ENCODE measurements at regions of chr16 and their contacts with region 1.

Region 1: DNA sequence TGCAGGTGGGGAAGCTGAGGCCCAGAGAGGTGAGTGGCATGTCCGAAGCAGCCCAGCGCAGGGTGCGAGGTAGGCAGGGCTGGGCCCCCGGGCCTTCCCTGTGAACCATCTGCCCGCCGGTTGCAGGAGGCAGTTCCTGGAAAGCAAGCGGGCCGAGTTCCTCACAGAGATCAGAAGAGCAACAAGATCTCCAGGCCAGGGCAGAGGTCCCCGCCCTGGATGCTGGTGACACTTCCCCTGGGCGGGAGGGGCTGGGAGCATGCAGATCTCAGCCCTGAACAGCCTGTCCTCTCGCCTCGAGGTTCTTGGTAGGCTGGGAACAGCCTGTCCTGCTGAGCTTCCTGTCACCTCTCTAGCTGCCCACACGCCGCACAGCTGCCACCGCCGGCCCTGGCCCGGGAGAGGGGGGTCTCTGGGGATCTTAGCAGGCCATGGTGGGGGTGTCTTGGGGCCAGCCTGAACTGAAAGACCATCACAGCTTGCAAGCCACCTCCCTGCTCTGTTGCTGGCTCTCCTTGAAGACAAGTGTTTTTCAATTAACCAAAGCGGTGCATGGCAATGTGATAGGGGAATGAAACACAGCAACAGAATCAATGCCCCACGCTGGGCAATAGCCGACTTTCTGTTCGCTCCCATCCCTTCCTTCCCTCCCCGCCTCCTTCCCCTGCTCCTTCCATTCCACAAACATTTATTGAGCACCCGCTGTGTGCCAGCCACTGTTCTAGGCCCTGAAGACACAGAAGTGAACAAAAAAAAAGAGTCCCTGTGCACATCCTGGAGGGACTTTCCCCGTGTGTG is 31.7 kb downstream of the SOCS1 start:
- DNase-seq: peak; percentile 90
- ATAC-seq: peak; percentile 77
- H3K4me3 Mint-ChIP-seq: peak overlapping the region; percentile 80
- H3K27ac Mint-ChIP-seq: peak overlapping the region; percentile 99
- H3K4me1 Mint-ChIP-seq: peaks cover 82% of the 10 kb centered on the region
- H3K27me3 Mint-ChIP-seq: no peaks in the 10 kb centered on the region

Region 2: DNA sequence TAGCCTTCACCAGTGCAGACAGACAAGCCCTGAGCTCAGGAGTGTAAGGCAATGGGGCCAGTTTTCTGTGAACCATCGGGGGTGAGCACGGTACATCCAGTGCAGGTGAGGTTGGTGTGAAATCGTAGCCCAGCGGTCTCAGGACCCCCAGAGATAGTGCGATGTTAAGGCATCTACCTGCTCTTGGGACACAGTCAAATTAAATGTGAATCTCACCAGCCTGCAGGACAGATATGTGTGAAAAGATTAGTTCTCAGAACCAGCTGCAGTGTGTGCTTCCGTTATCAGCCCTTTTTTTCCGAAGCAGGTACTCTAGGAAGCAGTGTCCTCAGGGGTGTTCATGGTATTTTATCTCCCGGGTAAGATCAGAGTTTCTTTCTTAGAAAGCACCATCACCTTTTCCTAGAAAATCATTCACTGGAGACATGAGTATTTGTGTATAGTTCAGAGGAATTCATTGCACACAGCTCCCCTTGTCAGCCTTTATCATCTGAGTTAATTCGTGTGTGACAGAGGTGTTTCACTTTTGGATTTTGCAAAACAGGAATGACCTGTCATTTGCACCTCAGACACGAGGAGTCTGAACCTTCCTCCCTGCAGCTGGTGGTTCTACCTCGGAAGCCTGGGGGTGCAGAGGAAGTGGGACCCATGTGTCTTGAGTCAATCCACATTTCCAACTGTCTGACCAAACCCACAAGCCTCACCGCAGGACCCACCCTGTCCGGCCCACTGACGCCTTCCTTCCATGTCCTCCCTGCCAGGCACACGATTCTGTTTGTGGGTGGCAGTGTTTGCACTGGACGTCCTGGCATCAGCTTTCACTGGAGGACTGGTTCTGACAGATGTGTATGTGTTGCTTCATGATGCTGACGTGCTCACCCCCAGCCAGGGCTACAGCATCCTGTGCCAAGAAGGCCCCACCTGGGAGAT is 172.2 kb before region 1 on chr16:
- CTCF ChIA-PET with region 1: interaction called, 3 read pairs
- POLR2A ChIA-PET with region 1: interaction called, 13 read pairs
- DNase-seq: peak; percentile 92
- ATAC-seq: peak; percentile 83
- H3K4me3 Mint-ChIP-seq: peak overlapping the region; percentile 17
- H3K27ac Mint-ChIP-seq: peak overlapping the region; percentile 97
- H3K4me1 Mint-ChIP-seq: peaks cover 98% of the 10 kb centered on the region
- H3K27me3 Mint-ChIP-seq: no peaks in the 10 kb centered on the region

Region 3: GRCh38 chr16:11094072-11094856 is 130.0 kb before region 1 on chr16:
- CTCF ChIA-PET with region 1: interaction called, 4 read pairs
- POLR2A ChIA-PET with region 1: interaction called, 14 read pairs
- DNase-seq: peak; percentile 81
- ATAC-seq: peak; percentile 85
- H3K4me3 Mint-ChIP-seq: peak overlapping the region; percentile 39
- H3K27ac Mint-ChIP-seq: peak overlapping the region; percentile 90
- H3K4me1 Mint-ChIP-seq: peaks cover 94% of the 10 kb centered on the region
- H3K27me3 Mint-ChIP-seq: no peaks in the 10 kb centered on the region

Region 4: GRCh38 chr16:11161974-11162373 is 62.3 kb before region 1 on chr16:
- CTCF ChIA-PET with region 1: interaction called, 3 read pairs
- POLR2A ChIA-PET with region 1: interaction called, 10 read pairs
- DNase-seq: no peak
- ATAC-seq: no peak
- H3K4me3 Mint-ChIP-seq: no peak overlapping the region
- H3K27ac Mint-ChIP-seq: peak overlapping the region; percentile 81
- H3K4me1 Mint-ChIP-seq: peaks cover 95% of the 10 kb centered on the region
- H3K27me3 Mint-ChIP-seq: no peaks in the 10 kb centered on the region

Region 5: GRCh38 chr16:11205754-11206581 is 18.3 kb before region 1 on chr16:
- CTCF ChIA-PET with region 1: interaction called, 4 read pairs
- POLR2A ChIA-PET with region 1: interaction called, 10 read pairs
- DNase-seq: no peak
- ATAC-seq: peak; percentile 31
- H3K4me3 Mint-ChIP-seq: no peak overlapping the region
- H3K27ac Mint-ChIP-seq: peak overlapping the region; percentile 83
- H3K4me1 Mint-ChIP-seq: peaks cover 65% of the 10 kb centered on the region
- H3K27me3 Mint-ChIP-seq: no peaks in the 10 kb centered on the region

Region 6: GRCh38 chr16:11240636-11241473 is 16.6 kb after region 1 on chr16:
- CTCF ChIA-PET with region 1: interaction called, 9 read pairs
- POLR2A ChIA-PET with region 1: interaction called, 15 read pairs
- DNase-seq: peak; percentile 54
- ATAC-seq: peak; percentile 67
- H3K4me3 Mint-ChIP-seq: peak overlapping the region; percentile 64
- H3K27ac Mint-ChIP-seq: no peak overlapping the region
- H3K4me1 Mint-ChIP-seq: peaks cover 23% of the 10 kb centered on the region
- H3K27me3 Mint-ChIP-seq: no peaks in the 10 kb centered on the region

Measured in activated CD8-positive, alpha-beta T cell treated with anti-CD3 and anti-CD28 coated beads, Interleukin-2, amount 10 ng/mL, durations not matched to agents 7 days and 5 days (primary cell).